Endothelial cell of umbilical vein (primary cell): ENCODE measurements at regions of chr16 and their contacts with region 1.

Region 1: GRCh38 chr16:10918294-10919002 is 23.8 kb downstream of the DEXI start:
- DNase-seq: peak; percentile 92
- H3K4me3 ChIP-seq: peak overlapping the region in 1 of 3 experiments; percentile 9
- H3K27ac ChIP-seq: no peak overlapping the region
- H3K4me1 ChIP-seq: no peaks in the 10 kb centered on the region
- H3K27me3 ChIP-seq: no peaks in the 10 kb centered on the region
- CTCF ChIP-seq: peak; percentile 95 to 98
- POLR2A ChIP-seq: no peak

Region 2: DNA sequence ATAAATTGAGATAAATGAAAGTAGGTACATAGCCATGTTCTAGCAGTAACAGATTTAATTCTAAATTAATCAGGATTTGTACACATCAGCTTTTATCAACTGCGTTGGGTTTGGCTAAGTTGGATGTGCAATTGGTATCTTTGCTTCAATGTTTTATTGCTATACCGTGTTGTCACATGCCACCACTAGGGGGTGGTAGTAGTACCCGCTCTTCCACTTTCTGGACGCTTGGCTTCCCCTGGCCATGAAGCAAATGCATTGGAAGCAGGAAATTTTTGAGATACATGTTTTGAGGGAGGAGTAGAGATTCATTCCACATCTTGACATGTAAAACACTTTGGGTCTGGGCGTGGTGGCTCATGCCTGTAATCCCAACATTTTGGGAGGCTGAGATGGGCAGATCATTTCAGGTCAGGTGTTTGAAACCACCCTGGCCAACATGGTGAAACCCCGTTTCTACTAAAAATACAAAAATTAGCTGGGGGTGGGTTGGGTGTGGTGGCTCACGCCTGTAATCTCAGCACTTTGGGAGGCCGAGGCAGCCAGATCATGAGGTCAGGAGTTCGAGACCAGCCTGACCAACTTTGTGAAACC is 396.7 kb before region 1 on chr16:
- CTCF ChIA-PET with region 1: interaction called, 61 read pairs
- POLR2A ChIA-PET with region 1: no interaction called
- dilution Hi-C with region 1: no loop called
- intact Hi-C with region 1: loop called (anchors 1 kb)
- DNase-seq: peak; percentile 49
- H3K4me3 ChIP-seq: no peak overlapping the region
- H3K27ac ChIP-seq: no peak overlapping the region
- H3K4me1 ChIP-seq: no peaks in the 10 kb centered on the region
- H3K27me3 ChIP-seq: no peaks in the 10 kb centered on the region
- CTCF ChIP-seq: peak; percentile 69 to 82
- POLR2A ChIP-seq: no peak

Region 3: DNA sequence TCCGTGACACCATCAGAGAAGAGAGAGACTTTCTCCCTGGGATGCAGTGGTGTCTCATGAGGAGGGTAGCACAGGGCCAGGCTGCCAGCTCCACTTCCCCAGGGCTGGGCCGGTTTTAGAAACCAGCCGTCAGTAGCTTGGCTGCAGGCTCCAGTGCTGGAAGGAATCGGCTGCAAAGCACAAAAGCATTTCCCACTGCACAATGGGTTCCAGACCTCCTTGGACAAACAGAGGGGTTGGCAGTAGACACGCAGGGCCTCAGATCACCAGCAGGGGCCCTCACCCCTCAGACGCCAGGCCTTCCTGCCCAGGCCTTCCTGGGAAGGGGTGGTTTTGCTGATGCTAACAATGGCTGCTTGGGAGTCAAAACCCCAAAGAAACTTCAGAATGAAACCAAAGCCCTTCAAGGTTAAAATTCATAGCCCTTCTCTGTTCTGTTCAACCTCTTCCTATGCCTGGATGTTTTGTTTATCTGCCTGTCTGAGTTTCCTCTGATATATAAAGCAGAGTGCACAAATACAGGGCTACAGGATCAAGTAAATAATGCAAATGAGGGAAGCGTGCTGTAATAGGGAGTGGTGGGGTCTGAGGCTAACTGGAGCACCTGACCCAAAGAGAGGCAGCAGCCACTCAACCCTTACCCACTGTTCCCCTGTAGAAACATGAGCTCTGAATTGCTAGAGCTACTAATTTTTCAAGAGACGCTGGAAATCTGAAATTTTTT is 250.0 kb before region 1 on chr16:
- CTCF ChIA-PET with region 1: interaction called, 19 read pairs
- POLR2A ChIA-PET with region 1: no interaction called
- dilution Hi-C with region 1: no loop called
- intact Hi-C with region 1: loop called (anchors 1 kb)
- DNase-seq: peak; percentile 14
- H3K4me3 ChIP-seq: no peak overlapping the region
- H3K27ac ChIP-seq: no peak overlapping the region
- H3K4me1 ChIP-seq: no peaks in the 10 kb centered on the region
- H3K27me3 ChIP-seq: no peaks in the 10 kb centered on the region
- CTCF ChIP-seq: peak; percentile 34 to 66
- POLR2A ChIP-seq: no peak

Region 4: GRCh38 chr16:10743610-10744393 is 174.6 kb before region 1 on chr16 and contains the start of gene NUBP1:
- CTCF ChIA-PET with region 1: interaction called, 29 read pairs
- POLR2A ChIA-PET with region 1: no interaction called
- dilution Hi-C with region 1: no loop called
- intact Hi-C with region 1: loop called (anchors 2 kb)
- DNase-seq: peak; percentile 100
- H3K4me3 ChIP-seq: peak within 1 kb of the TSS; percentile 3 to 72 (median 56)
- H3K27ac ChIP-seq: peak within 1 kb of the TSS; percentile 80
- H3K4me1 ChIP-seq: peaks cover 7% of the 10 kb centered on the region
- H3K27me3 ChIP-seq: no peaks in the 10 kb centered on the region
- CTCF ChIP-seq: no peak
- POLR2A ChIP-seq: peak; percentile 86
- total RNA-seq, gene NUBP1: 23.6 and 28.7 TPM in 2 replicates

Region 5: DNA sequence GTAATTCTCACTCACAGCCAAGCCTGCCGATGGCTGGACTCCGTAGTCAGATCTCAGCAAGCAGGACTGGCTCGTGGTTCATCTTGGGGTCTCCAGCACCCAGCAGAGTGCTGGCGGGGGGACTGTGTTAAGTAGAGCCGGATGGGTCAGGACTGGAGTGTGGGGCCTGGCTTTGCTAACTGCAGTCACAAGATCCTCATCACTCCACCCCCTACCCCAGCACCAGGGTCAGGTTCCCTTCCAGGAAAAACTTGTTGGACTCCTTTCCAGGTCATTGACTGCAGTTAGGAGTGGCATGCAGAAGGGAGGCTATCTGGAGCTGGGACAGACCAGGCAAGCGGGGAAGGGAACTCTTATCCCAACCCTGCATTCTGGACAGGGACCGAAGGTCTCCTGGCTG is 35.4 kb before region 1 on chr16:
- CTCF ChIA-PET with region 1: no interaction called
- POLR2A ChIA-PET with region 1: no interaction called
- dilution Hi-C with region 1: no loop called
- intact Hi-C with region 1: no loop called
- DNase-seq: no peak
- H3K4me3 ChIP-seq: no peak overlapping the region
- H3K27ac ChIP-seq: no peak overlapping the region
- H3K4me1 ChIP-seq: no peaks in the 10 kb centered on the region
- H3K27me3 ChIP-seq: peaks cover 7% of the 10 kb centered on the region in 2 experiments
- CTCF ChIP-seq: no peak
- POLR2A ChIP-seq: no peak

Region 6: DNA sequence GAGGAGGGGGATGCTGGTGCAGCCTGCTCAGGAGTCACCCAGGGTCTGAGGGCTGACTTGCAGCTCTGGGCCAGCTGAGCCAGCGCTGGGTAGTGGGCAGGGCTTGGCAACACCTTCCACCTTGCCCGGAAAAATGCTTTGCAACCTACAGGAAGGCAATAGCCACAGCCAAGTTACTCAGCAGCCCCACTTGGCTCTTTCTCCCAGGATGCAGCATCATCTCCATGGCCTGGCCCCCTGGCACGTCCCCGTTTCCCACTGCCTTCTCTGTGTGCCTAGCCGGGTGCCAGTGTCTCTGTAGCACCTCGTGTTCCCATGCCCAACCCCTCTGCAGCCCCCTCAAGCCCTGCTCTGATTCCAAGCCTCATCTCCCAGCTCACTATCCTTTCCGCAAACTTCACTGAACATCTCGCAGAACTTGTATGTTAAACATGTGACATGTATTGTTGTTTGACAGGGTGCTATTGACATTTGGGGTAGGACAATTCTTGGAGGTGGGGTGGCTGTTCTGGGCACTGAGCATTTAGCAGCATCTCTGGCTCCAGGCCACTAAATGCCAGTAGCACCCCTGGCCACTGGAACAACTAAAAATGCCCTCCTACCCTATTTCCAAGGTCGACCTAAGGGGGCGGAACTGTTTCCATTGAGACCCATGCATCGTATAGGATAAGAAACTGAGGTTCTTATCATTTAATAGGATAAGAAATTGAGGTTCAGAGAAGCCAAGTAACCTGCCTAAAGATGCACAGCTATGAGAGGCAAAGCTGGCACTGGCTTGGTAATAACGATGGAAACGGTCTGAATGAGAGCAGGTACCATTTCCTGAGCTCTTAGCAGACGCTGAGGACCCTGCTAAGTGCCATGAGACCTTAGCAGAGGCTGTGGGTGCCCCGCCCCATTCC is 11.7 kb after region 1 on chr16:
- CTCF ChIA-PET with region 1: interaction called, 17 read pairs
- POLR2A ChIA-PET with region 1: no interaction called
- dilution Hi-C with region 1: no loop called
- intact Hi-C with region 1: no loop called
- DNase-seq: no peak
- H3K4me3 ChIP-seq: no peak overlapping the region
- H3K27ac ChIP-seq: no peak overlapping the region
- H3K4me1 ChIP-seq: no peaks in the 10 kb centered on the region
- H3K27me3 ChIP-seq: no peaks in the 10 kb centered on the region
- CTCF ChIP-seq: no peak
- POLR2A ChIP-seq: no peak

Region 7: DNA sequence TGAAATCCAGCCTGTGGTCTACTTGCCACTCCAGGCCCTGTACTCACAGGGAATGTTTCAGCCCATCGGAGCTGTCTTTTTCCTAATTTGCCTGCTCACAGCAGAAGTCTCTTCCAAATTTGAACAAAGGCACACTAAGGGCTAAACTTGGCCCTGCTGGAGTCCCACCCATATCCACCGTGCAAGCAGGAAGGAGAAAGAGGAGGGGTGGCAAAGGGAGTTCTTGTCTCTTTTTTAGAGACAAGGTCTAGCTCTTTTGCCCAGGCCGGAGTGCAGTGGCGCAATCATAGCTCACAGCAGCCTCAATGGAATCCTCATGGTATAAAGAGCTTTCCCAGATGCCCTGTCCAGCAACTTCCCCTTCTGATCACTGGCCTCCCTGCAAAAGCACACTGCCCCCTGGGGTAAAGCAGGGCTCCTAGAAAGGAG is 365.4 kb after region 1 on chr16:
- CTCF ChIA-PET with region 1: no interaction called
- POLR2A ChIA-PET with region 1: no interaction called
- dilution Hi-C with region 1: no loop called
- intact Hi-C with region 1: no loop called
- DNase-seq: no peak
- H3K4me3 ChIP-seq: no peak overlapping the region
- H3K27ac ChIP-seq: no peak overlapping the region
- H3K4me1 ChIP-seq: no peaks in the 10 kb centered on the region
- H3K27me3 ChIP-seq: peaks cover 3 to 4% of the 10 kb centered on the region in 2 experiments
- CTCF ChIP-seq: no peak
- POLR2A ChIP-seq: no peak

Region 8: DNA sequence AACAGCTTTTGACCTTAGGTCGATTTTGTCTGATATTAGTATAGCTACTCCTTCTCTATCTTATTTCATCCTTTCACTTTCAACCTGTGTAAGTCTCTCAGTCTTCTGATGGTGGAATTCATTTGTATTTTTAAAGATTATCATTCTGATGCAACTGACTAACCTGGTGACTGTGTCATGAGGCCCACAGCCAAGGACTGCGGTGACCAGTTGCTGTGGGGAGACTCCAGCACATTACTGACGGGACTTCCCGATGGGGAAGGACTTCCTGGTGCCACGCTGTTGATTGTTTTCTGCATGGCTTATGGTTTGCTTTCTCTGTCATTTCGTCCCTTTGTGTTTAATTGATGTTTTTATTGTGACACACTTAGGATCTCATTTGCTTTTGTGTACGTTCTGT is 461.0 kb after region 1 on chr16:
- CTCF ChIA-PET with region 1: no interaction called
- POLR2A ChIA-PET with region 1: no interaction called
- dilution Hi-C with region 1: no loop called
- intact Hi-C with region 1: no loop called
- DNase-seq: no peak
- H3K4me3 ChIP-seq: no peak overlapping the region
- H3K27ac ChIP-seq: no peak overlapping the region
- H3K4me1 ChIP-seq: no peaks in the 10 kb centered on the region
- H3K27me3 ChIP-seq: peaks cover 0 to 2% of the 10 kb centered on the region in 2 experiments
- CTCF ChIP-seq: no peak
- POLR2A ChIP-seq: no peak